Ovary (tissue), 10 donors: ENCODE measurements at regions of chr6 and their contacts with region 1.

Region 1: GRCh38 chr6:131427434-131428058 is 145.5 kb upstream of the ARG1 start:
- DNase-seq: peak in 1 of 5 donors; percentile 14
- H3K4me3 ChIP-seq: no peak overlapping the region
- H3K27ac ChIP-seq: no peak overlapping the region
- H3K4me1 ChIP-seq: no peaks in the 10 kb centered on the region
- H3K27me3 ChIP-seq: no peaks in the 10 kb centered on the region
- CTCF ChIP-seq: no peak
- EP300 ChIP-seq: no peak
- POLR2A ChIP-seq: no peak

Region 2: GRCh38 chr6:131400054-131400781 is 27.3 kb before region 1 on chr6:
- intact Hi-C with region 1: loop called in 1 of 4 experiments (anchors 2 kb)
- DNase-seq: no peak
- H3K4me3 ChIP-seq: no peak overlapping the region
- H3K27ac ChIP-seq: no peak overlapping the region
- H3K4me1 ChIP-seq: peaks cover 4% of the 10 kb centered on the region
- H3K27me3 ChIP-seq: no peaks in the 10 kb centered on the region
- CTCF ChIP-seq: no peak
- EP300 ChIP-seq: no peak
- POLR2A ChIP-seq: no peak

Region 3: DNA sequence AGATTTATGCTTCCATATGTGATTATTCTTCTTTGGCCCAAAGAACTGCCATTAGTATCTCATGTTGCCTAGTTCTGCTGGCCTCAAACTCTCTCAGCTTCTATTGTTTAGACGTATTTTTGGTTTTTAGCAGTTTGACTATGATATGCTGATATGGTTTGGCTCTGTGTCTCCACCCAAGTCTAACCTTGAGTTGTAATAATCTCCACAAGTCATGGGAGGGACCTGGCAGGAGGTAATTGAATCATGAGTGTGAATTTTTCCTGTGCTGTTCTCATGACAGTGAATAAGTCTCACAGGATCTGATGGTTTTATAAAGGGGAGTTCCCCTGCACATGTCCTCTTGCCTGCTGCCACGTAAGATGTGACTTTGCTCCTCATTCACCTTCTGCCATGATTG is 48.8 kb after region 1 on chr6:
- intact Hi-C with region 1: no loop called
- DNase-seq: no peak
- H3K4me3 ChIP-seq: no peak overlapping the region
- H3K27ac ChIP-seq: no peak overlapping the region
- H3K4me1 ChIP-seq: no peaks in the 10 kb centered on the region
- H3K27me3 ChIP-seq: no peaks in the 10 kb centered on the region
- CTCF ChIP-seq: no peak
- EP300 ChIP-seq: no peak
- POLR2A ChIP-seq: no peak